ENCODE measurements at regions of chr6 and their contacts with region 1.

Region 1: DNA sequence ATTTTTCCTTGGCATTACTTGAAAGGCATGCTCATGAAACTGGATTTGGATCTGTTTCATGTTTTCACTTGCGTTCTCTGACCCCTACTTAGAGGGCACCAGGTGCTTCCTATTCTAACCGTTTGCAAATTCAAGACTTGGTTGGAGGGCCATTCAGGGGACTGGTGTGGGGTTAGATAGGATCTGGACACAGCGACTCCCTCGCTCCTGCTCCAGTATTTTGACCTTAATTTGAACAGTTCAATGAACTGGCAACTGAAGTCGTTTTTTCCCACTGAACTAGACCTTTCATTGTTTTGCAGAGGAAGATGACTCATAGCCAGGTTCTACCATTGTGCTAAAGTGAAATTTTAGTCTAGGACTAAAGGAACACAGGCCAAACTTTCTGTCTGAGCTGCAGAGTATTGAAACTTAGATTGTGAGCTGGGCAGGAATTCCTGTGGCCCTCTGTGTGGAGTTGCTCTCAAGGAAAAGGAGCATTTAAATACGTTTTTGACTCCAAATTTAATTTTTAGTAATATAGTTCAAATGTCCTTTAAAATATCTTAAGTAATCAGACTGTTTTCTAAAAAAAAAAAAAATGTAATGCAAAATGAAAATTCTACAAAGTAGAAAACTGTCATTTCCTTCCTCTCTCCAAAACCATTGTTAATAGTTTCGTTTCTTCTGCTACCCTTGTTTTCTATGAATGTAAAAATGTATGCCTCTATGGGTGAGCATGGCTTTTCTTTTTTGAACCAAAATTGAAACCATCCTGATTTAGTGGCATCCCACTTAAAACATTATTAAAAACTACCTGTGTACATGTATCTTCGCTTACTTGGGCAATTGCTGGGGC is 64.8 kb downstream of the UTRN start:
- DNase-seq: peak in 6 of 9 donors; percentile 30 to 55 (median 46)
- ATAC-seq: peak; percentile 59
- H3K4me3 ChIP-seq: peak overlapping the region; percentile 53
- H3K4me3 Mint-ChIP-seq: peak overlapping the region; percentile 72 to 97 (median 86)
- H3K27ac ChIP-seq: peak overlapping the region; percentile 76
- H3K27ac Mint-ChIP-seq: peak overlapping the region; percentile 84 to 99 (median 96)
- H3K4me1 ChIP-seq: peaks cover 76 to 87% of the 10 kb centered on the region in 2 donors
- H3K4me1 Mint-ChIP-seq: peaks cover 74 to 95% (median 81%) of the 10 kb centered on the region in 7 donors
- H3K27me3 ChIP-seq: no peaks in the 10 kb centered on the region
- H3K27me3 Mint-ChIP-seq: no peaks in the 10 kb centered on the region

Region 2: DNA sequence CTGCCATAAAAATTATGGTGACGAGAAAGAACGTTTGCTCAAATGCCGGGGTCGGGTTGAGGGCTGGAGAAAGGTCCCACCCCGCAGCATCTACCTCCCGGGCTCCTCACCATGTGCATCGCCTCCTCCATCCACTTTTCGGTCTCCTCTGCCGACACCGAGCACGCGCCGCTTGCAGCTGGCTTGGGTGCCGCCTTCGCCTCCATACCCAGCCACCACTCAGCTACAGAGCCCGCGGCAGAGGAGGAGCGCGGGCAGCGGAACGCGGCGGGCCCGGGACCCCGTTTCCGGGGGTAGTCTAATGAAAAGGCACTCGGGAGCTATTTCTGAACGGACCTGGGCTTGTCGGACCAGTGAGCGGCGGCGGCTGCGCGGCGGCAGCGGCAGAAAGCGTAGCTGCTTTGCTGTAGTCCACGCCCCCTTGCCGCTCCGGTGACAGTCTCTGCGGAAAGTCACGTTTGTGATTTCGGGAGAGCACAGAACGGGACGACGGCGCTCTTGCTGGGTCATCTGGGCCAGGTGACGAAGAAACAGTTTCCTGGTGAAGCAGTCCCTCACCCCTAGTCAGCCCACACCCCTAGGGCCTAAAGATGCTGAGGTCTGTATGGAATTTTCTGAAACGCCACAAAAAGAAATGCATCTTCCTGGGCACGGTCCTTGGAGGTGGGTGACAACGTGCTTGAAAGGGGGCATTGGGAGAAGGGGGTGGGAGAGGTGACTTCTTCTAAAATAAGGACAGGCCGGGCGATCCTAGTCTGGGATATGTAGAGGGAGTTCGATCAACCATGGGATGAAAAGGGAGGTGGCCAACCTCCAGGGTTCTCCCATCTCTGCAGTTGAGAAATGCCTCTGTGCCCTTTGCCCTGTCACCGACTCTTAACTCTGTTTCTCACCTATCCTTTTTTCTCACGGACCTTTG is 899.2 kb before region 1 on chr6 and contains the starts of genes ADAT2 and PEX3:
- CTCF ChIA-PET with region 1: no interaction called
- POLR2A ChIA-PET with region 1: no interaction called
- intact Hi-C with region 1: loop called in 1 of 2 experiments (anchors 5 kb)
- DNase-seq: peak; percentile 87 to 95 (median 94)
- ATAC-seq: peak; percentile 98
- H3K4me3 ChIP-seq: peak within 1 kb of the TSS; percentile 89
- H3K4me3 Mint-ChIP-seq: peak within 1 kb of the TSS; percentile 84 to 100 (median 99)
- H3K27ac ChIP-seq: peak within 1 kb of the TSS; percentile 80
- H3K27ac Mint-ChIP-seq: peak within 1 kb of the TSS; percentile 93 to 99 (median 96)
- H3K4me1 ChIP-seq: peaks cover 14 to 18% of the 10 kb centered on the region in 2 donors
- H3K4me1 Mint-ChIP-seq: peaks cover 20 to 61% (median 49%) of the 10 kb centered on the region in 7 donors
- H3K27me3 ChIP-seq: no peaks in the 10 kb centered on the region
- H3K27me3 Mint-ChIP-seq: no peaks in the 10 kb centered on the region
- total RNA-seq, gene ADAT2: 18.4 to 25.8 (median 20.8) TPM
- total RNA-seq, gene PEX3: 10.9 to 28.8 (median 19.1) TPM

Region 3: DNA sequence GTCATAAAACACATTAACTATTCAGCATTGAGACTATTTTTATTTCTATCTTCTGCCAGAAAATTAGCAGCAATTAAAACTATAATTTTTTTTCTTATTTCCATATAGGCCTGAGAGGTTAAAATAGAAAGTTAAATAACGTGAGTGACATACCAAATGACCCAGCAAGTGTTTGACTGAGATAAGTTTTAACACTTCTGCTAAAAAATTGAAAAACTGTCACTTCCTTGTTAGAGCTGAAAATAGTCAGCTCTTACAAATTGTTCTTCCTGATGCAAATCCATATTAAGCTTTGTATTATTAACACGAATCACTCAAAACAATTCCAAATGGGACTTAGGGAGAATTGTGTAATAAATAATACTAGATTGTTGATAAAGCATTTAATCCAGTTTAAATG is 226.1 kb before region 1 on chr6:
- CTCF ChIA-PET with region 1: no interaction called
- POLR2A ChIA-PET with region 1: no interaction called
- intact Hi-C with region 1: no loop called
- DNase-seq: no peak
- ATAC-seq: no peak
- H3K4me3 ChIP-seq: no peak overlapping the region
- H3K4me3 Mint-ChIP-seq: no peak overlapping the region
- H3K27ac ChIP-seq: no peak overlapping the region
- H3K27ac Mint-ChIP-seq: no peak overlapping the region
- H3K4me1 ChIP-seq: no peaks in the 10 kb centered on the region
- H3K4me1 Mint-ChIP-seq: peaks cover 0 to 2% (median 0%) of the 10 kb centered on the region in 7 donors
- H3K27me3 ChIP-seq: no peaks in the 10 kb centered on the region
- H3K27me3 Mint-ChIP-seq: peaks cover 0 to 5% (median 0%) of the 10 kb centered on the region in 5 donors

Region 4: DNA sequence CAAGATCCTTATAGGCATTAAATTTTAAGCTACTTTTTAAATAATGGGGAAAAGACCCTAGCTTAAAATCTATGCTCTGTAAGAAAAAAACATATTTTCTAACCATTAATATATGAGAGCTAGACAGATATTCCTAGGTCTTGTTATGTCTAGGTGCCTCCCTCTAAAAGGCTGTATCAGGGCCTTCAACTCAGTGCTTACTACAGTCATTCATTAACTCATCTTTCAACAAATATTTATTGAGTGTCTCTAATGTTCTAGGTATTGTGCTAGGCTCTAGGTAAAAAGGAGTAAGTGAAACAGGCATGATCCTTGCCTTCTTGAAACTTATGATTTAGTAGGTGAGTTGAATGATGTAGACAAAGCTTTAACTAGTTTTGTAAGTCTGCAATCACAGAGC is 206.0 kb before region 1 on chr6:
- CTCF ChIA-PET with region 1: no interaction called
- POLR2A ChIA-PET with region 1: no interaction called
- intact Hi-C with region 1: no loop called
- DNase-seq: no peak
- ATAC-seq: no peak
- H3K4me3 ChIP-seq: no peak overlapping the region
- H3K4me3 Mint-ChIP-seq: no peak overlapping the region
- H3K27ac ChIP-seq: no peak overlapping the region
- H3K27ac Mint-ChIP-seq: no peak overlapping the region
- H3K4me1 ChIP-seq: no peaks in the 10 kb centered on the region
- H3K4me1 Mint-ChIP-seq: peaks cover 0 to 3% (median 0%) of the 10 kb centered on the region in 7 donors
- H3K27me3 ChIP-seq: peaks cover 0 to 3% of the 10 kb centered on the region in 2 donors
- H3K27me3 Mint-ChIP-seq: peaks cover 0 to 2% (median 0%) of the 10 kb centered on the region in 5 donors

Region 5: DNA sequence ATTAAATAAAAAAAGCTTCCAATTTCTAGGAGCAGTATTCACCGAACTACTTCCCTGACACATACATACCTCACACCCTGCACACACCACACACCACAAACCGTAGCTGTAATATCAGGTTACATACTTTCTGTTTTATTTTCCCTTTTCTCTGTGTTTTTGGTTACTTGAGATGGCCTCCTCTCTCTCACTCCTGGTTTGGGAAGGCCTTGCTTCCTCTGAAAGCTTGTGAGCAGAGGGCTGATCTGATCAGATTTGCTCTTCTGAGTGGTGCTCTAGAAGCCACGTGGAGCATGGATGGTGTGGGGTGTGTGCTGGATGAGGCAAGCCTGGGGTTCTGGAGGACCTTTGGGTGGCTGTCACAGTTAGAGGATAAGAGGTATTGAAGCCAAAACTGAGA is 43.9 kb before region 1 on chr6:
- CTCF ChIA-PET with region 1: interaction called, 3 read pairs
- POLR2A ChIA-PET with region 1: no interaction called
- intact Hi-C with region 1: loop called in 1 of 2 experiments (anchors 1 kb)
- DNase-seq: peak in 1 of 9 donors; percentile 27
- ATAC-seq: peak; percentile 71
- H3K4me3 ChIP-seq: peak overlapping the region; percentile 23
- H3K4me3 Mint-ChIP-seq: peak overlapping the region in 2 of 10 donors; percentile 67 to 71
- H3K27ac ChIP-seq: no peak overlapping the region
- H3K27ac Mint-ChIP-seq: peak overlapping the region in 2 of 9 donors; percentile 33 to 87
- H3K4me1 ChIP-seq: peaks cover 0 to 44% of the 10 kb centered on the region in 2 donors
- H3K4me1 Mint-ChIP-seq: peaks cover 0 to 48% (median 5%) of the 10 kb centered on the region in 7 donors
- H3K27me3 ChIP-seq: no peaks in the 10 kb centered on the region
- H3K27me3 Mint-ChIP-seq: peaks cover 0 to 12% (median 0%) of the 10 kb centered on the region in 5 donors

Region 6: GRCh38 chr6:144365271-144365670 is 15.4 kb after region 1 on chr6:
- CTCF ChIA-PET with region 1: no interaction called
- POLR2A ChIA-PET with region 1: interaction called, 3 read pairs
- intact Hi-C with region 1: loop called in 1 of 2 experiments (anchors 2 kb)
- DNase-seq: no peak
- ATAC-seq: no peak
- H3K4me3 ChIP-seq: no peak overlapping the region
- H3K4me3 Mint-ChIP-seq: peak overlapping the region in 2 of 10 donors; percentile 6 to 7
- H3K27ac ChIP-seq: no peak overlapping the region
- H3K27ac Mint-ChIP-seq: peak overlapping the region in 2 of 9 donors; percentile 48 to 56
- H3K4me1 ChIP-seq: peaks cover 15 to 21% of the 10 kb centered on the region in 2 donors
- H3K4me1 Mint-ChIP-seq: peaks cover 42 to 80% (median 64%) of the 10 kb centered on the region in 7 donors
- H3K27me3 ChIP-seq: no peaks in the 10 kb centered on the region
- H3K27me3 Mint-ChIP-seq: no peaks in the 10 kb centered on the region

Region 7: GRCh38 chr6:144411332-144412190 is 61.7 kb after region 1 on chr6:
- CTCF ChIA-PET with region 1: no interaction called
- POLR2A ChIA-PET with region 1: no interaction called
- intact Hi-C with region 1: loop called in 1 of 2 experiments (anchors 10 kb)
- DNase-seq: peak in 3 of 9 donors; percentile 6 to 20 (median 7)
- ATAC-seq: no peak
- H3K4me3 ChIP-seq: no peak overlapping the region
- H3K4me3 Mint-ChIP-seq: peak overlapping the region; percentile 39 to 87 (median 69)
- H3K27ac ChIP-seq: no peak overlapping the region
- H3K27ac Mint-ChIP-seq: peak overlapping the region; percentile 11 to 87 (median 68)
- H3K4me1 ChIP-seq: peaks cover 14 to 22% of the 10 kb centered on the region in 2 donors
- H3K4me1 Mint-ChIP-seq: peaks cover 34 to 86% (median 66%) of the 10 kb centered on the region in 7 donors
- H3K27me3 ChIP-seq: no peaks in the 10 kb centered on the region
- H3K27me3 Mint-ChIP-seq: no peaks in the 10 kb centered on the region

Region 8: GRCh38 chr6:144675231-144675861 is 325.4 kb after region 1 on chr6:
- CTCF ChIA-PET with region 1: no interaction called
- POLR2A ChIA-PET with region 1: no interaction called
- intact Hi-C with region 1: loop called in 1 of 2 experiments (anchors 10 kb)
- DNase-seq: no peak
- ATAC-seq: peak; percentile 46
- H3K4me3 ChIP-seq: no peak overlapping the region
- H3K4me3 Mint-ChIP-seq: peak overlapping the region in 2 of 10 donors; percentile 32 to 60
- H3K27ac ChIP-seq: no peak overlapping the region
- H3K27ac Mint-ChIP-seq: peak overlapping the region in 5 of 9 donors; percentile 13 to 82 (median 63)
- H3K4me1 ChIP-seq: no peaks in the 10 kb centered on the region
- H3K4me1 Mint-ChIP-seq: peaks cover 19 to 51% (median 35%) of the 10 kb centered on the region in 7 donors
- H3K27me3 ChIP-seq: no peaks in the 10 kb centered on the region
- H3K27me3 Mint-ChIP-seq: no peaks in the 10 kb centered on the region